Esophagus squamous epithelium (tissue), 5 donors: ENCODE measurements at regions of chr17 and their contacts with region 1.

Region 1: DNA sequence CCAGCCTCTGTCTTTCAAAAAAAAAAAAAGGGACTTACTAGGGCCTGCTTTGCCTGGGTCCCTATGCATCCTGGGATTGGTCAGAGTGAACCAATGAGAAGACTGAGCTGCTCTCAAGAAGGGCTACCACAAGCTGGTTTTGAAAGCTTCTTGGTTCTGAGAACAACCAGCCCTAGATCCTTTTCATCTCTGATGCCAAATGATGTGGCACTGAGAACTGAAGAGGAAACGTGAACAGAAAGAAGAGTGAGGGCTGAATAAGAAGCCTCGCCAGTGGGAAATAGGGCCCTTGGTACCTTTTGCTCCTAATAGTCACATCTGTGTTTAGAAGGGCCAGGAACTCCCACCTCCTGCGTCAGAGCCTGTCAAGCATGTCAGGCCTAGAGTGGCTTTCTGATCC is 10.7 kb downstream of the TACO1 start:
- DNase-seq: no peak
- H3K4me3 ChIP-seq: no peak overlapping the region
- H3K27ac ChIP-seq: no peak overlapping the region
- H3K4me1 ChIP-seq: no peaks in the 10 kb centered on the region
- H3K27me3 ChIP-seq: no peaks in the 10 kb centered on the region
- CTCF ChIP-seq: no peak
- POLR2A ChIP-seq: no peak

Region 2: DNA sequence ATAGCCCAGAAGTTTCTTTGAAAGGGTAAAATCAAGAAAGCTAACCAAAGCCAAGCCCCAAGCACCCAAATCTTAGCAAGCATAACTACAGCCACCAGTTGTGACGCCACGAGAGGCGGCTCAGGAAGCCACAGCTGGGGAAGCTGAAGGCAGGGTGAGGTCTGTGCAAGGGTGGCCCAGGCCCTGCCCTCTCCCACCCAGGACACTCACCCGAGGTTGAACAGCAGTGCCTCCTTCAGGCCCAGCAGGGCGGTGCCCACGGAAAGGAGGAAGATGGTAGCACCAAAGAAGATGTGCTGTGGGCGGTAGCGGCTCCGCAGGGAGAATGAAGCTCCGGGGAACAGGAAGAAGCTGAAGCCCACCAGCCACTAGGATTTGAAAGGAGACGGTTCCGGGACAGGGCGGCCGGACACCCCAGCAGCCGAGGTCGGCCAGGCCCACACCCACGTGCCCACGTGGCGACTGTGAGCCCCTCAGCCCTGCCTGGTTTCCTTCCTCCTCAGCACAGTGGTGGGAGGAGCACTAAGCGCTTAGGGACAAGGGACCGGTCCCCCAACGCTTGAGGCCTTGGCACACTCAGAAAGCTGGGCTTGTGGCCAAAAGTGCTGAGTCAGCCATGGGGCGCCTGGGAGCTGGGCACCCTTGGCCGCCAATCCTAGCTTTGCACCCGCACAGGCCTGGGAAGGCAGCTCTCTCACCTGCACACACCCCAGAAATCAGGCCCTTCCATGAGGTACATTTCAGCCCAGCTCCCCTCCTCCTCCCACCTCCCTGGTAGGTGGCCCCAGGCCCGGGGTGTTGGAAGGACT is 176.3 kb before region 1 on chr17:
- intact Hi-C with region 1: loop called (anchors 5 kb)
- DNase-seq: no peak
- H3K4me3 ChIP-seq: no peak overlapping the region
- H3K27ac ChIP-seq: peak overlapping the region; percentile 51 to 81 (median 69)
- H3K4me1 ChIP-seq: peaks cover 25 to 83% (median 62%) of the 10 kb centered on the region in 3 donors
- H3K27me3 ChIP-seq: no peaks in the 10 kb centered on the region
- CTCF ChIP-seq: peak in 1 of 6 experiments; percentile 22
- POLR2A ChIP-seq: no peak

Region 3: DNA sequence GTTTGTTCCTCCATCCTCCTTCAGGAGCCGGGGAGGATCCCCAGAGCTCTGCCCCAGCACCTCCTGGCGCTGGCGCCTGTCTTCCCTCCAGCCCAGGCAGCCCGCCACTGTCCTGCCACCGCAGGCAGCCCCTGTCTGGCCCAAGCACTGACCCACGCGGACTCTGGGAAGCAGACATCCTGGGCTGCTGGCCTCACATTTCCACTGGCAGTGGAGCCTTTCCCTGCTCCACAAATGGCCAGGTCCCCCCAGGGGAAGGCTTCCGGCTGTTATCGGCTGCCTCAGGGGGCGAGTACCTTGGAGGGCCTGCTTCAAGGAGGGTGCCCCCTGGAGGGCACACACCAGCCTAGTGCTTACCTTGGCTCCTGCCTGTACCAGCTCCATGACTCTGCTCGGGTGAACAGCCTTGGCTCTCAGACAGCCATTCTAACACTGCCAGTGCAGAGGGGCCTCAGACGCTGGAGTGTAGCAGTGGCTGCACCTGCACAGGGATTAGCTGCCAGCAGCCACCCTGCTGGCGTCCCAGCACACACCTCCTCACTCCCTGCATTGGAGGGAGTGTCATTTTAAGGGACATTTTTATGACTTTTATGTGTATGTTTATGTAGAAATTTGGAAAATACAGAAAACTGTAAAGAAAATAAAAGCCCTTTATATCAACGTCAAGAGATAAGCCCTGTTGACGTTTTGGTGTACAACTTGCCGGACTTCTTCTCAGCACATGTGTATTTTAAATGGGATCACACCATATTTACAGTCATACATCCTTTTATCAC is 113.5 kb before region 1 on chr17:
- intact Hi-C with region 1: no loop called
- DNase-seq: no peak
- H3K4me3 ChIP-seq: no peak overlapping the region
- H3K27ac ChIP-seq: no peak overlapping the region
- H3K4me1 ChIP-seq: no peaks in the 10 kb centered on the region
- H3K27me3 ChIP-seq: peaks cover 0 to 28% (median 0%) of the 10 kb centered on the region in 4 donors
- CTCF ChIP-seq: no peak
- POLR2A ChIP-seq: no peak

Region 4: GRCh38 chr17:63564562-63564961 is 46.8 kb before region 1 on chr17:
- intact Hi-C with region 1: no loop called
- DNase-seq: no peak
- H3K4me3 ChIP-seq: no peak overlapping the region
- H3K27ac ChIP-seq: no peak overlapping the region
- H3K4me1 ChIP-seq: peaks cover 0 to 2% (median 0%) of the 10 kb centered on the region in 3 donors
- H3K27me3 ChIP-seq: no peaks in the 10 kb centered on the region
- CTCF ChIP-seq: no peak
- POLR2A ChIP-seq: no peak

Region 5: DNA sequence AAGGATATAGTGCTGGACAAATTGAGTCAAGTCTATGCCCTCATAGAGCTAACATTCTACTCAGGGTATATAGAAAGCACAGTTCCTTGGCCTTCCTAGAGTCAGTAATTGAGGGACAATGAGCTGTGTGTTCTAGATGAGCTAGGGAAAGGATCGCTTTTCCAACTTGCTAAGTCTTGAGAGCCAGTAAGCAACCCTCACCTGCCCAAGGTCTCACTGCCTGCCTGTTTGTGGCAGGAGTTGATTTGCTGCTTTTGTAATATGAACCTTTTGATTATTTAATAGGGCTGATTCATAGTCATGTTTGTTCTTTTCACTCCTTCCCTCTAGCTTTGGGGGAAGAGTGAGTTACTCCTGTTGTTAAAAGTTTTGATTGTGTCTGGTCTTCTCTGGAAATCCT is 169.2 kb after region 1 on chr17:
- intact Hi-C with region 1: no loop called
- DNase-seq: no peak
- H3K4me3 ChIP-seq: no peak overlapping the region
- H3K27ac ChIP-seq: peak overlapping the region; percentile 10 to 51 (median 43)
- H3K4me1 ChIP-seq: peaks cover 4 to 90% (median 21%) of the 10 kb centered on the region in 3 donors
- H3K27me3 ChIP-seq: no peaks in the 10 kb centered on the region
- CTCF ChIP-seq: no peak
- POLR2A ChIP-seq: no peak